ENCODE measurements at regions of chr15 and their contacts with region 1.

Region 1: GRCh38 chr15:83207622-83208411 is at the start of gene HDGFL3:
- DNase-seq: peak; percentile 51 to 79 (median 64)
- H3K4me3 ChIP-seq: peak within 1 kb of the TSS; percentile 69 to 95 (median 74)
- H3K27ac ChIP-seq: peak within 1 kb of the TSS; percentile 53 to 93 (median 79)
- H3K4me1 ChIP-seq: peaks cover 33 to 35% of the 10 kb centered on the region in 2 donors
- H3K27me3 ChIP-seq: no peaks in the 10 kb centered on the region
- CTCF ChIP-seq: peak in 1 of 6 experiments; percentile 15
- POLR2A ChIP-seq: peak in 1 of 2 donors; percentile 45
- total RNA-seq, gene HDGFL3: 22.6 to 82.2 (median 56.8) TPM

Region 2: DNA sequence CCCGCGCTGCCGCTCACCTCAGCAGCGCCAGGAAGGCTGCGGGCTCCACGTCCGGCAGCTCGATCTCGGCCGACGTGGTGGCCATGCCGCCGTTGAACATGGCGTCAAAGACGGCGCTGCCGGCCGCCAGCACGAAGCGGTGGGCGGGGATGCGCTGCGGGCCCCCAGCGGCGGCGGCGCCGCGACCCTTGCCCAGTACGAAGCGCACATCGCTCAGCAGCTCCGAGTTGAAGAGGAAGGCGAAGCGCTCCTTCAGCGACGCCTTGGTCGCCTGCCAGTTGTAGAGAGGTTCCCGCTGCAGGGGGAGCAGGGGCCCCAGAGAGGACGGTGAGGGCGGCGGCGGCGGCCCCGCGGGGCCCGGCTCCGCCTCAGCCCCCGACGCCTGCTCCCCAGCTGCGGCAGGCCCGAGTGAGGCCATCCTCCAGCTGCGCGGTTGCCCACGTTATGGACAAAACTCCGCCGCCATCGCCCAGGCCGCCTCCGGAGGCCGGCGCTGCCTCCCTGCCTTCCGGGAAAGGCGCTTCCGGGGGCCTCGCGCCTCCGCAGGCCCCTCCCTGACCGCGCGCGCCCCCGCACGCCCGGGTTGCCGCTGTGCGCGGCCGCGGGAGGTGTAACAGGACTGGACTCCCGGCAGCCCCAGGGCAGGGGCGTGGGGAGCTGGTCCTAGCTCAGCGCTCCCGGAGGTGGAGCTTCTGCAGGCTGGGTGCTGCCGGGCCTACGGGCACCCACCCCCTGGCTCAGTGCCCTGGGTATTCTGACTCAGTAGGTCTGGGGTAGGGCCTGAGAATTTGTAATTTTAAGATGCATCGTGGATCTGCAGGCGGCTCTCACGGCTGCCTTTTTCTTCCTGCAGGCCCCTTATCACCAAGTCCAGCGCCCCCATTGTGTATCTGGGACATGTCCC is 140.8 kb before region 1 on chr15 and contains the start of gene BTBD1:
- intact Hi-C with region 1: loop called in 1 of 2 experiments (anchors 5 kb)
- DNase-seq: peak; percentile 93 to 98 (median 96)
- H3K4me3 ChIP-seq: peak within 1 kb of the TSS; percentile 26 to 96 (median 94)
- H3K27ac ChIP-seq: peak within 1 kb of the TSS; percentile 83 to 98 (median 96)
- H3K4me1 ChIP-seq: peaks cover 14 to 47% of the 10 kb centered on the region in 2 donors
- H3K27me3 ChIP-seq: no peaks in the 10 kb centered on the region
- CTCF ChIP-seq: no peak
- POLR2A ChIP-seq: peak; percentile 88 to 93
- total RNA-seq, gene BTBD1: 38.8 to 72.6 (median 50.7) TPM

Region 3: GRCh38 chr15:83115831-83116565 is 91.8 kb before region 1 on chr15:
- intact Hi-C with region 1: no loop called
- DNase-seq: no peak
- H3K4me3 ChIP-seq: no peak overlapping the region
- H3K27ac ChIP-seq: no peak overlapping the region
- H3K4me1 ChIP-seq: no peaks in the 10 kb centered on the region
- H3K27me3 ChIP-seq: no peaks in the 10 kb centered on the region
- CTCF ChIP-seq: no peak
- POLR2A ChIP-seq: no peak

Region 4: DNA sequence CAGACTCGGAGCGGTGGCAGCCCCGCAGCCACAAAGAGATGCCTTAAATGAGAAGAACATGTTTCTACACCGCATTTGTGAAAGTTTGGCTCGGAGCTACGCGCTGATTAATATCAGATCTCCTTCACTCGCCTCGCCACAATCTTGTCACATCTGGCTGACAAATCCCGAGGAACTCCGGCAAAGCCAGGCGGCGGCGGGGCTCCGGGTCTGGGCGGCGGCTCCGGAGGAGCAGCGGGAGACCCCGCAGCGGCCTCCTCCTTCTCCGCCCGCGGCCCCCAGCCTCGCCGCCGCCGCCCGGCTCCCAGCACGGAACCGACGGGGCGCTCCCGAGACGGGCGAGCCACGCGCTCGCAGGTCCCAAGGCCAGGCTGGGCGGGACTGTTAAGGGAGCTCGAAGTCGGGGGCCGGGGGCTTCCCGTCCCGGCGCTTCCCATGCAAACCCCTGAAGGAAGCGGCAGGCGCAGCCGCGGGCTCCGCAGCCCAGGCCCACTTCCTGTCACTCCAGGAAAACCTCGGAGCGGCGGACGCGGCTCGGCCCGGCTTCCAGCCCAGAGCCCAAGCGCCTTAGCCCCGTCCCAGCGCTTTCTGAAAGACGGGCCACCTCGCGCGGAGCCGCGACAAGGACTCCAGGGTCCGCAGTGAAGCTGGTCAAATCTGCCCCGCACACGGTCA is 75.5 kb after region 1 on chr15:
- intact Hi-C with region 1: no loop called
- DNase-seq: peak in 2 of 7 donors; percentile 9 to 23
- H3K4me3 ChIP-seq: peak overlapping the region in 1 of 4 donors; percentile 47
- H3K27ac ChIP-seq: no peak overlapping the region
- H3K4me1 ChIP-seq: peaks cover 0 to 9% of the 10 kb centered on the region in 2 donors
- H3K27me3 ChIP-seq: peaks cover 62% of the 10 kb centered on the region
- CTCF ChIP-seq: no peak
- POLR2A ChIP-seq: no peak

Region 5: DNA sequence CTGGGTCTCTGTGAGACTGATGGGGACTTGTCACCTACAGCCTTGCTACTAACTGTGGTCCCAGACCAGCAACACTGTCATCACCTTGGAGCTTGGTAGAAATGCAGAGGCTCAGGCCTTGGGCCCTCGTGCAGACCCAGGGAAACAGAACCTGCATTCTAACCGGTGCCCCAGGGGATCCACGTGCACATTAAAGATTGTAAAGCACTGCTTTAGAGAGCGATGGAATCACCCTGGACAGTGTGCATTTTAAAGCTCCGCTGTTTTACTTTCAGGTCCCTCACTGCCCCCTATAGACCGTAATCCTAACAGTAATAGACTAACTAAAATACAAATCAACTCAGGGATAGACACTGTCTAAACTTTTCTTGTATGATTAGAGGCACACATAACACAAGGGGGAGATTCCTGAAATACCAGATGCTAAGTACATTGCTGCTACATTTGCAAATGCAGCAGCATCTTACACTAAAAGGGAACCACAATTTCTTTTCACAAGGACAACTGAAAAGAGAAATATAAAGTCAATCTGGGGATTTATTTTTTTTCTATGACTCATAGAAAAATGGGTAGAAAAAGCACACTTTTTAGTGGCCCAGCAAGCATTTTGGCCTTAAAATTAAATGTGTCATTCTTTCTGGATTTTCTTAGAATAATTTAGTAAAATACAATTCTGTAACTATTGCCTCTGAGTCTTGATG is 228.8 kb after region 1 on chr15:
- intact Hi-C with region 1: no loop called
- DNase-seq: no peak
- H3K4me3 ChIP-seq: no peak overlapping the region
- H3K27ac ChIP-seq: no peak overlapping the region
- H3K4me1 ChIP-seq: no peaks in the 10 kb centered on the region
- H3K27me3 ChIP-seq: no peaks in the 10 kb centered on the region
- CTCF ChIP-seq: peak in 3 of 6 experiments; percentile 6 to 27 (median 17)
- POLR2A ChIP-seq: no peak